Activated CD4-positive, alpha-beta T cell treated with anti-CD3 and anti-CD28 coated beads for 36 hours (primary cell): ENCODE measurements at regions of chr10 and their contacts with region 1.

Region 1: DNA sequence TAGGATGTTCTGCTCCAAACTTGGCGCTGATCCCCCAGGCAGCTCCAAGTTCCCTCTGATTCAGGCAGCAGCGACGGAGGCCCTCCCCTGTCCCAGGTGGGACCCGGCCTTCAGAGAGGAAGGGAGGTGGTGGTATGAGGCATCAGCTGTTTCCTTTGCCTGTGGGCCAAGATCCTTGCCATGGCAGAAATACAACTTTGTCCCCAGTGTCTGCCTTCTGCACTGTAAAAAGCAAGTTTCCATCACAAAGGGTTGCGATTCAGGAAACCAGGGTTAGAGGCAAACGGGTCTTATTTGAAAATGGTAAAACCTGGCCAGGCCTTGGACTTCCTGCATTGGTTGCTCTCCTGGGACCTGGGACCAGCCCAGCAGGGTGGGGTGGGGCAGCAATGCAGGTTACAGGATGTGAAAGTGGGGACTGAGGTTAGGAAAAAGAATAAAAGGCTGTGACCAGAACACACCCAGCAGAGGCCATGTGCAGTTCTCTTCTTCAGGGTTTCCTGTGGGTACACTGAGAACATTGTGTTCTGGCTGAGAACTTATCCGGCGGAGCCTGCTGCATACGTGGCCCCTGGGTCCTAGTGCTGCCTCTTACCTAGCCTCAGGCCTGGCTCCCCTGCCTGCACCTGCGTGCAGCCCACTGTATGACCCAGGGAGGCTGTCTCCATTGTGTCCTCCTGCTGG is 25.1 kb upstream of the DDIT4 start:
- DNase-seq: peak; percentile 84
- ATAC-seq: peak; percentile 91
- H3K4me3 Mint-ChIP-seq: peak overlapping the region; percentile 71
- H3K27ac Mint-ChIP-seq: peak overlapping the region; percentile 89
- H3K4me1 Mint-ChIP-seq: peaks cover 82% of the 10 kb centered on the region
- H3K27me3 Mint-ChIP-seq: no peaks in the 10 kb centered on the region

Region 2: GRCh38 chr10:71963756-71964668 is 284.6 kb before region 1 on chr10 and contains the start of gene CHST3:
- CTCF ChIA-PET with region 1: no interaction called
- POLR2A ChIA-PET with region 1: no interaction called
- intact Hi-C with region 1: loop called in 1 of 2 experiments (anchors 10 kb)
- DNase-seq: peak; percentile 34
- ATAC-seq: peak; percentile 37
- H3K4me3 Mint-ChIP-seq: peak within 1 kb of the TSS; percentile 73
- H3K27ac Mint-ChIP-seq: peak within 1 kb of the TSS; percentile 78
- H3K4me1 Mint-ChIP-seq: peaks cover 18% of the 10 kb centered on the region
- H3K27me3 Mint-ChIP-seq: peaks cover 45% of the 10 kb centered on the region
- total RNA-seq, gene CHST3: 0.46 to 0.47 TPM

Region 3: GRCh38 chr10:72158176-72158575 is 90.4 kb before region 1 on chr10:
- CTCF ChIA-PET with region 1: no interaction called
- POLR2A ChIA-PET with region 1: no interaction called
- intact Hi-C with region 1: no loop called
- DNase-seq: no peak
- ATAC-seq: no peak
- H3K4me3 Mint-ChIP-seq: no peak overlapping the region
- H3K27ac Mint-ChIP-seq: no peak overlapping the region
- H3K4me1 Mint-ChIP-seq: peaks cover 12% of the 10 kb centered on the region
- H3K27me3 Mint-ChIP-seq: no peaks in the 10 kb centered on the region

Region 4: GRCh38 chr10:72223743-72224101 is 24.9 kb before region 1 on chr10:
- CTCF ChIA-PET with region 1: interaction called, 4 read pairs
- POLR2A ChIA-PET with region 1: no interaction called
- intact Hi-C with region 1: loop called in 1 of 2 experiments (anchors 1 kb)
- DNase-seq: no peak
- ATAC-seq: peak; percentile 41
- H3K4me3 Mint-ChIP-seq: peak overlapping the region; percentile 52
- H3K27ac Mint-ChIP-seq: peak overlapping the region; percentile 92
- H3K4me1 Mint-ChIP-seq: peaks cover 55% of the 10 kb centered on the region
- H3K27me3 Mint-ChIP-seq: no peaks in the 10 kb centered on the region

Region 5: DNA sequence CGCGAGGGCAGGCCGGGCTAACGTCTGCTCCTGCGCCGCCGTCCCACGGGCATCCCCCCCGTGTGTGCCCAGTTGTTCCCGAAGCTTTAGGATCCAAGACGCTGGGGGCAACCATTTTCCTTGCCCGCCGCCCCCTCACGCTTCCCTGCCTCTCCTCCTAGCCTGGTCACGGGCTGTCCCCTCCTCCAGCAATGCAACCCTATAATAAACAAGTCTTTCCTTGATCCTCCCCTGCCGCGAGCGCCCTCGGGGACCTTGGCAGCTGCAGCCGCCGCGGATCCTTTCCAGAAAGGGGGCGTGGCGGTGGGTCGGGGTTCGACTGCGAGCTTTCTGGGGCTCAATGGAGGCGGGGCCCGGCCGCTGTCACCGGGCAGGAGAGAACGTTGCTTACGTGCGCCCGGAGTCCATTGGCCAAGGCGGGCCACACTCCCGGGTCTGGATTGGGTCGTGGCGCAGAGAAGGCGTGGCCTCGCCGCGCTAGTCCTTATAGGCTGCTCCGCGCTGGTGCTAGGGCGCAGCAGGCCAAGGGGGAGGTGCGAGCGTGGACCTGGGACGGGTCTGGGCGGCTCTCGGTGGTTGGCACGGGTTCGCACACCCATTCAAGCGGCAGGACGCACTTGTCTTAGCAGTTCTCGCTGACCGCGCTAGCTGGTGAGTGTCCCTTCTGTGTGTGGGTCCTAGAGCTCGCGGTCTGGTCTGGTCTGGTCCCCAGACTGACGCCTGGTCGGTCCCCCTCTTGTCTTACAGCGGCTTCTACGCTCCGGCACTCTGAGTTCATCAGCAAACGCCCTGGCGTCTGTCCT is 25.0 kb after region 1 on chr10 and contains the start of gene DDIT4:
- CTCF ChIA-PET with region 1: interaction called, 4 read pairs
- POLR2A ChIA-PET with region 1: interaction called, 4 read pairs
- intact Hi-C with region 1: loop called in 1 of 2 experiments (anchors 1 kb)
- DNase-seq: peak; percentile 100
- ATAC-seq: peak; percentile 84
- H3K4me3 Mint-ChIP-seq: peak within 1 kb of the TSS; percentile 95
- H3K27ac Mint-ChIP-seq: peak within 1 kb of the TSS; percentile 99
- H3K4me1 Mint-ChIP-seq: peaks cover 44% of the 10 kb centered on the region
- H3K27me3 Mint-ChIP-seq: no peaks in the 10 kb centered on the region
- total RNA-seq, gene DDIT4: 750 to 1,039 TPM

Region 6: GRCh38 chr10:72278668-72279393 is 30.2 kb after region 1 on chr10:
- CTCF ChIA-PET with region 1: interaction called, 4 read pairs
- POLR2A ChIA-PET with region 1: interaction called, 10 read pairs
- intact Hi-C with region 1: no loop called
- DNase-seq: no peak
- ATAC-seq: no peak
- H3K4me3 Mint-ChIP-seq: no peak overlapping the region
- H3K27ac Mint-ChIP-seq: peak overlapping the region; percentile 74
- H3K4me1 Mint-ChIP-seq: peaks cover 30% of the 10 kb centered on the region
- H3K27me3 Mint-ChIP-seq: no peaks in the 10 kb centered on the region

Region 7: DNA sequence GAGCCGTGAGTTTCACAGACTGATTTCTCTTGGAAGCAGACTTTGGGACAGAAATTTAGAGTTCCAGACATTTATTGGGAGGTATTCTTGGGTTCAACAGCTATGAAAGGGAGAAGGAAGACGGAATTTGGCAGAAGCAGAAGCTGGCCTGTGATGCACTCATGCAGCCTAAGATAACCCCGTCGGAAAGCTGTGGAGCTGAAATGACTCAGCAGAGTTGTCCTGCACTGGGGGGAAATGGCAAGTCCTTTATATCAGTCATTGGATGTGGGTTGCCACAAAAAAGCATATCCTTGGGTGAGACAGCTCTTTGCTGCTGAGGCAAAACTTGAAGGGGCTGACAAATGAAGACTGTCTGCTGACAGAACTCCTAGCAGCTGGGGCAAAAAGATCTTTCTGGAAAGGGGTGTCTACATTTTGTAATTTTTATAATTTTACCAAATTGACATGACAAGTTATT is 388.8 kb after region 1 on chr10:
- CTCF ChIA-PET with region 1: no interaction called
- POLR2A ChIA-PET with region 1: no interaction called
- intact Hi-C with region 1: no loop called
- DNase-seq: peak; percentile 67
- ATAC-seq: peak; percentile 95
- H3K4me3 Mint-ChIP-seq: no peak overlapping the region
- H3K27ac Mint-ChIP-seq: no peak overlapping the region
- H3K4me1 Mint-ChIP-seq: peaks cover 4% of the 10 kb centered on the region
- H3K27me3 Mint-ChIP-seq: no peaks in the 10 kb centered on the region

Region 8: DNA sequence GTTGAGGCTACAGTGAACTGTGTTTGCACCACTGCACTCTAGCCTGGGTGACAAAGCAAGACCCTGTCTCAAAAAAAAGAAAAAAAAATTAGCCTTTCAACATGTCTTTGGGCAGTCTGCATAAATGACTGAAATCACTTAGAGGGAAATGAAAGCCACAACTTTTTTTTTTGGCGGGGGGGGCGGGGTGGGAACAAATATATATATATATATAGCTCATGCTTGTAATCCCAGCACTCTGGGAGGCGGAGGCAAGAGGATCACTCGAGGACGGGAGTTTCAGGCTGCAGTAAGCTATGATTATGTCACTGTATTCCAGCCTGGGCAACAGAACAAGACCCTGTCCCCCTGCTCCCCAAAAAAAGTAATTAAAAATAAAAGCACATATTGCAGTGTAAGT is 400.7 kb after region 1 on chr10:
- CTCF ChIA-PET with region 1: no interaction called
- POLR2A ChIA-PET with region 1: no interaction called
- intact Hi-C with region 1: no loop called
- DNase-seq: no peak
- ATAC-seq: no peak
- H3K4me3 Mint-ChIP-seq: no peak overlapping the region
- H3K27ac Mint-ChIP-seq: no peak overlapping the region
- H3K4me1 Mint-ChIP-seq: no peaks in the 10 kb centered on the region
- H3K27me3 Mint-ChIP-seq: no peaks in the 10 kb centered on the region